Activated naive CD4-positive, alpha-beta T cell treated with anti-CD3 and anti-CD28 coated beads for 36 hours (primary cell): ENCODE measurements at regions of chr12 and their contacts with region 1.

Region 1: DNA sequence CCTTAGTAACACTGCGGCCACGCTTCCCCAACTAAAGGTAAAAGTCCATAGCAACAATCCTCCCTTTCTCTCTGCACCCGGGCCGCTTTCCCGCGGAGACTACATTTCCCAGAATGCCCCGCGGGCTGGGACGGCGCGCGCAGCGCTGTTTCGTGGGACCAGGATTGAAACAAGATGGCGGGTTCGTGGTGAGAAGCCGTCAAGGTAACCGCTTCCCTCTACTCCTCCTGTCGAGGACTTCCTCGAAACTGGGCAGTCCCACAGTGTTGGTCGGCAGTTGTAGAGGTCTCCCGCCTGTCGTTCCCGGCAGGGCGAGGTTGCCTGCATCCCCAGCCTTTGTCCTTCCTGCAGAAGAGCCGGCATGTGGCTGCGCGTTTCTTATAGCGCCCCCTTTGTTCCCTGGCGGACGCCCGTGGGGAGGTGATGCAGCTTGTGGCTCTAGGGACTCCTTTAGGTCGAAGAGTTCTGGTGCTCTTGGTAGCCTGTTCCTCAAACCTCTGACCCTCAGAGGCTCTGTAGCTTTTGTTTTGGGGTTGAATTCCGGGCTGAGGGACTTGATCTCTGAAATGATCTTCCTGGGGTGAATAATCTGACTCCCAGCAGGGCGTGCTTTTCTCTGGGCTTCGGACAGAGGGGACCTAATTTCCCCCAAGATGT is at the start of gene MRPL42:
- DNase-seq: peak; percentile 95
- H3K4me3 Mint-ChIP-seq: peak within 1 kb of the TSS; percentile 95
- H3K27ac Mint-ChIP-seq: peak within 1 kb of the TSS; percentile 91
- H3K4me1 Mint-ChIP-seq: peaks cover 32% of the 10 kb centered on the region
- H3K27me3 Mint-ChIP-seq: no peaks in the 10 kb centered on the region
- total RNA-seq, gene MRPL42: 93.8 to 95.8 TPM

Region 2: GRCh38 chr12:93448796-93449195 is 18.7 kb before region 1 on chr12:
- CTCF ChIA-PET with region 1: interaction called, 5 read pairs
- intact Hi-C with region 1: loop called (anchors 1 kb)
- DNase-seq: no peak
- H3K4me3 Mint-ChIP-seq: no peak overlapping the region
- H3K27ac Mint-ChIP-seq: peak overlapping the region; percentile 47
- H3K4me1 Mint-ChIP-seq: peaks cover 22% of the 10 kb centered on the region
- H3K27me3 Mint-ChIP-seq: no peaks in the 10 kb centered on the region